ENCODE measurements at regions of chr12 and their contacts with region 1.

Region 1: GRCh38 chr12:65823513-65824375 is 539 bp upstream of the HMGA2 start:
- DNase-seq: no peak
- H3K4me3 Mint-ChIP-seq: peak overlapping the region; percentile 53
- H3K27ac Mint-ChIP-seq: no peak overlapping the region
- H3K4me1 Mint-ChIP-seq: peaks cover 15% of the 10 kb centered on the region
- H3K27me3 Mint-ChIP-seq: peaks cover 56% of the 10 kb centered on the region

Region 2: DNA sequence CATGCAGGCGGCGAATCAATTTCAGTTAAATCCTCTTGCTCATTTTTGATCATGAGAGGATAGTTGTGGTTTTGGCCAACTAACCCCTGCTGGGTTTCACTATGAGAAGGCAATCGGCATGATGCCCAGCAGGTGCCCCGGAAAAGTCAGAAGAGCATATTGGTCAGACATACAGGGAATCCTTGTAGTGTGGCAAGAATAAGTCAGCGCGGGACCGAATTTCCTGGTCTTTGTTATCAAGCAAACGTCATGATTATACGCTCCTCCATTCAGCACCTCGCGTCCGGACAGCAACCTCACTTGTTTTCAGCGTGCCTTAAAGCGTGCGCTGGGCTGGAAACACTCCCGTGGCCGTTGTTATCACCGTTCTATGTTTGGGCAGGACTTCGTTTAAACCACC is 997.5 kb before region 1 on chr12:
- intact Hi-C with region 1: loop called (anchors 10 kb)
- DNase-seq: peak; percentile 9
- H3K4me3 Mint-ChIP-seq: peak overlapping the region; percentile 55
- H3K27ac Mint-ChIP-seq: no peak overlapping the region
- H3K4me1 Mint-ChIP-seq: peaks cover 8% of the 10 kb centered on the region
- H3K27me3 Mint-ChIP-seq: peaks cover 39% of the 10 kb centered on the region

Region 3: GRCh38 chr12:65673732-65674131 is 150.0 kb before region 1 on chr12:
- intact Hi-C with region 1: no loop called
- DNase-seq: no peak
- H3K4me3 Mint-ChIP-seq: no peak overlapping the region
- H3K27ac Mint-ChIP-seq: no peak overlapping the region
- H3K4me1 Mint-ChIP-seq: no peaks in the 10 kb centered on the region
- H3K27me3 Mint-ChIP-seq: peaks cover 2% of the 10 kb centered on the region

Region 4: DNA sequence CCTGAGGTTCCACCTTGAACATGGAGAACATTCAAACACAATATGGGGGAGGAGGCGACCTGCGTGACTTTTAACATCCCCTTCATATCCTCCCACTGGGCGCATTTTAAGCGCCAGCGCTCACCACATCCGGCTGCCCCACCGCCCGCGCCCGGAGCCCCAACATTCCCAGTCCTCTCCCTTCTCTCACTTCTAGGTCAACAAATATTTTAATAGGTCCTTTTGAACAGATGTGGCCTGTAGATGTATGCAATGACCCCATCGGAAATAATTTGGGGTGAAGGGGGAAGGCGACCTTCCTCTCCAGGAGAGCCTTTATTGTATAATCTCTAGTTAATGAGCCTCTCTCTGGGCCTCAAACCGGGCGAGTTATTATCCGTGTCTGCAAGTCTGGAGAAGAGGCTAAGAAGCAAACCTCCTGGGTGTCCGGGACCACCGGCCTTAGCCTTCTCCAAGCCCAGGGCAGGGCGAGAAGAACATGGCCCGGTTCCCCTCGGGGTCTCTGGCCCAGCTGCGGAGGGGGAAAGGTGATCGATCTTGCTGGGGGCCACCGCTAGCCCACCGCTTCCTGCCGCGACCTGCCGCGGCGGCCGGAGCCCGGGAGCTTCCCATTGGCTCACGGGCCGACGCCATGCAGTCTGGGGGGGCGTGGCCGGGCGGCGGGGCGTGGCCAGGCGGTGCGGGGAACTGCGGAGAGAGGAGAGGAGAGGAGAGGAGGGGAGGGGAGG is 82.7 kb before region 1 on chr12:
- intact Hi-C with region 1: loop called (anchors 5 kb)
- DNase-seq: peak; percentile 41
- H3K4me3 Mint-ChIP-seq: peak overlapping the region; percentile 71
- H3K27ac Mint-ChIP-seq: no peak overlapping the region
- H3K4me1 Mint-ChIP-seq: peaks cover 10% of the 10 kb centered on the region
- H3K27me3 Mint-ChIP-seq: peaks cover 17% of the 10 kb centered on the region

Measured in activated T-helper 1 cell treated with anti-CD3 and anti-CD28 coated beads, Interleukin-12 subunit alpha, Interleukin-12 subunit beta, Interleukin-2, Interleukin-4 antibody, amounts not matched to agents 30 ng/mL and 10 ng/mL and 1 ng/mL, durations not matched to agents 14 hours and 24 hours and 36 hours (primary cell).